Mammary epithelial cell (primary cell): ENCODE measurements at regions of chr7 and their contacts with region 1.

Region 1: DNA sequence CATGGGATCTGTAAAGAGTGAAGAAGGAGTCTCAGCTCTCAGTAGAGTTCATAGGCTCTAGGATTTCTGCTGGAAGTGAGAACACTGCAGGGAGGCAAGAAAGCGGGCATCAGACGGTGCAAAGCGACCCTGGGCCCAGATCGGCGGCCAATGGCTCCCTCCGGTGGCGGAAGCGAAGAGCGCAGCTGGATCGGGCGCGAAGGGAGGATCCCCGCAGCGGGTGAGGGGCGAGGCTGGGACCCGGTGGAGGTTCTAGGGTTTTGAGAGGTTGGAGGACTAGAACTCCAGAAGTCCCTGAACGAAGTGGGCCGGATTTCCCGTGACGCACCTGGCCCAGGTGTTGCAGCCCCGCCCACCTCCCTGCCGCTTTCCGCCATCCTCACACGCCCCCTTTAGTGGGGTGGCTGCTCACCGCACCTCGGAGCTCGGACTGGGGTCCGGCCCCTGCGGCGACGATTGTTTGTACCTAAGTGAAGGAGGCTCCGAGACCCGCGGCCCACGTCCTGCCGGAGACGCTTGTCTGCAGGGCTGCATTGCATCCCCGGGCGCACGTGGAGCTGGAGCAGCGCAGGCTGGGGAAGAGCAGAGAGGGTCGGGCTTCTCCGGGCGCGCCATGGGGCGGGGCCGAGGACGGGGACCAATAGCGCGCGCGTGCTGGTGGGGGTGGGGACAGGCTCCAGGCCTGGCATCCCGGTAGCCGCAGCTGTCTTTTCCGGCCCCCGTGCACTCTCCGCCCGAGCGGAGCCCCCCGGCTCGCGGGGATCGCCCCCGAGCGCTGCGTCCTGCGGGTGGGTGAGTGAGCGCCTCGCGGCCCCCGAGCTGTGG is at the start of gene SLC12A9:
- DNase-seq: peak; percentile 92
- H3K4me3 ChIP-seq: peak within 1 kb of the TSS; percentile 82 to 86 (median 85)
- H3K27ac ChIP-seq: peak within 1 kb of the TSS; percentile 25
- H3K4me1 ChIP-seq: peaks cover 6% of the 10 kb centered on the region
- H3K27me3 ChIP-seq: no peaks in the 10 kb centered on the region
- CTCF ChIP-seq: peak; percentile 79 to 95
- total RNA-seq, gene SLC12A9: 11.7 to 31.0 TPM

Region 2: GRCh38 chr7:100478966-100479665 is 373.1 kb before region 1 on chr7 and contains the start of gene TSC22D4:
- CTCF ChIA-PET with region 1: no interaction called
- dilution Hi-C with region 1: no loop called
- in situ Hi-C with region 1: loop called in 1 of 2 experiments (anchors 25 kb)
- intact Hi-C with region 1: loop called (anchors 5 kb)
- DNase-seq: peak; percentile 90
- H3K4me3 ChIP-seq: peak within 1 kb of the TSS; percentile 92 to 94 (median 93)
- H3K27ac ChIP-seq: peak within 1 kb of the TSS; percentile 57
- H3K4me1 ChIP-seq: peaks cover 23% of the 10 kb centered on the region
- H3K27me3 ChIP-seq: no peaks in the 10 kb centered on the region
- CTCF ChIP-seq: no peak
- total RNA-seq, gene TSC22D4: 12.0 to 35.2 TPM

Region 3: GRCh38 chr7:100611974-100612729 is 240.1 kb before region 1 on chr7 and contains the start of gene MOSPD3:
- CTCF ChIA-PET with region 1: no interaction called
- dilution Hi-C with region 1: loop called (anchors 5 kb)
- in situ Hi-C with region 1: no loop called
- intact Hi-C with region 1: no loop called
- DNase-seq: peak; percentile 98
- H3K4me3 ChIP-seq: peak within 1 kb of the TSS; percentile 67 to 84 (median 70)
- H3K27ac ChIP-seq: peak within 1 kb of the TSS; percentile 86
- H3K4me1 ChIP-seq: peaks cover 6% of the 10 kb centered on the region
- H3K27me3 ChIP-seq: no peaks in the 10 kb centered on the region
- CTCF ChIP-seq: no peak
- total RNA-seq, gene MOSPD3: 6.8 to 16.3 TPM

Region 4: DNA sequence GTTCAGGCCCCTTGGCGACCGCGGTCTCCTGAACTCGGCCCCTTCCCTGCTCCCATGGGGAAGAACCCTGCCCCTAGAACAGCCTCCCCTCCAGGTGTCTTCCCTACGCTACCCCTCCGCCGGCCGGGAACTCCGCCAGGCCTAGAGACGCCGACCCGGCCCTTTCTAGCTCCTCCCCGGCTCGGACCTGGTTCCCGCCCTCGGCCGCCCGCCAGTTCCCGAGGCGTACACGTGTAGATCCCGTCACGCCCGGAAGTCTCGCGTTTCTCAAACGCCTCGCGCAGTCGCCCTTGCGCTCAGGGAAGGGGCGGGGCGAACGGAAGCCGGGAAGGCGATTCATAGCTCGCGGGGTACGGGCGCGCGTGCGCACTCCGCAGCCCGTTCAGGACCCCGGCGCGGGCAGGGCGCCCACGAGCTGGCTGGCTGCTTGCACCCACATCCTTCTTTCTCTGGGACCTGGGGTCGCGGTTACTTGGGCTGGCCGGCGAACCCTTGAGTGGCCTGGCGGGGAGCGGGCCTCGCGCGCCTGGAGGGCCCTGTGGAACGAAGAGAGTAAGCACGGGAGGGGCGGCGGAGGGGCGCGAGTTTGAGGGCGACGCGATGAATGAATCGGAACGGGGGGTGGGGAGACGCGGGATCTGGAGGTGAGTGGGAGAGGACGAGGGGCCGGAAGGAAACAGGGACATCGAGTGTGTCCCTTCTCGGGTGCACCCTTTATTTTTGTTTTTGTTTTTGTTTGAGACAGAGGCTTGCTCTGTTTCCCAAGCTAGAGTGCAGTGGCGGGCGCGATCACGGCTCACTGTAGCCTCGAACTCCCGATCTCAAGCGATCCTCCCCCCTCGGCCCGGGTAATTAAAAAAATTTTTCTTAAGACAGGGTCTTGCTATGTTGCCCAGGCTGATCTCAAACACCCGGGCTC is 146.2 kb before region 1 on chr7 and contains the start of gene POP7:
- CTCF ChIA-PET with region 1: interaction called, 9 read pairs
- dilution Hi-C with region 1: loop called (anchors 5 kb)
- in situ Hi-C with region 1: loop called (anchors 5 to 10 kb)
- intact Hi-C with region 1: loop called (anchors 1 kb)
- DNase-seq: peak; percentile 97
- H3K4me3 ChIP-seq: peak within 1 kb of the TSS; percentile 84 to 98 (median 90)
- H3K27ac ChIP-seq: peak within 1 kb of the TSS; percentile 72
- H3K4me1 ChIP-seq: peaks cover 12% of the 10 kb centered on the region
- H3K27me3 ChIP-seq: no peaks in the 10 kb centered on the region
- CTCF ChIP-seq: no peak
- total RNA-seq, gene POP7: 29.2 to 52.2 TPM

Region 5: DNA sequence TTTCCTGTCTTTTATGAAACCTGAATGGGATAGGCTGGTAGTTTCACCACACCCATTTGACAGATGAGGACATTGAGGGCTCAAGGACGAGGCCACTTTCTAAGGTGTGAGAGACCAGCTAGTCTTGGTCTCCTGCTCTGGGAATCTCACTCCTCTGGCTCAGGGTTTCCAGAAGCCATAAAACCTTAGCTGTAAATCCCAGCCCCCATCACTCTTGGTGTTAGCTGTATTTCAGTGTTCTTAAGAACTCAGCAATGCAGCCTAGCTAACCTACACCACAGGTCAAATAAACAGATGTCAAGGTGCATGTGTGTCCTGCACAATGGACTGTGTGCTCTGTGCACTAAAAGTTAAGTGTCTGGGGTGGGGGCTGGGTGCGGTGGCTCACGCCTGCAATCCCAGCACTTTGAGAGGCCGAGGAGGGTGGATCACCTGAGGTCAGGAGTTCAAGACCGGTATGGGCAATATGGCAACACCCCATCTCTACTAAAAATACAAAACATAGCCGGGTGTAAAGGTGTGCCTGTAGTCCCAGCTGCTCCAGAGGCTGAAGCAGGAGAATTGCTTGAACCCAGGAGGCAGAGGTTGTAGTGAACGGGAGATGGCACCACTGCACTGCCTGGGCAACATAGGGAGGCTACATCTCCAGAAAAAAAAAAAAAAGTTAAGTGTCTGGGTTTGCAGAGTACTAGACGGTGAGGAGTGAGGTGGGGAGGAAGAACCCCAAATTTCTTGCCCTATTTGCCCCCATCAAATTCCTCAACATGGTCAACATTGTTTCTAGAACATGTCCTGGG is 132.5 kb before region 1 on chr7:
- CTCF ChIA-PET with region 1: interaction called, 3 read pairs
- dilution Hi-C with region 1: loop called (anchors 5 kb)
- in situ Hi-C with region 1: no loop called
- intact Hi-C with region 1: loop called (anchors 1 kb)
- DNase-seq: peak; percentile 28
- H3K4me3 ChIP-seq: peak overlapping the region in 1 of 3 experiments; percentile 31
- H3K27ac ChIP-seq: no peak overlapping the region
- H3K4me1 ChIP-seq: peaks cover 3% of the 10 kb centered on the region
- H3K27me3 ChIP-seq: peaks cover 19% of the 10 kb centered on the region
- CTCF ChIP-seq: peak; percentile 32 to 76

Region 6: DNA sequence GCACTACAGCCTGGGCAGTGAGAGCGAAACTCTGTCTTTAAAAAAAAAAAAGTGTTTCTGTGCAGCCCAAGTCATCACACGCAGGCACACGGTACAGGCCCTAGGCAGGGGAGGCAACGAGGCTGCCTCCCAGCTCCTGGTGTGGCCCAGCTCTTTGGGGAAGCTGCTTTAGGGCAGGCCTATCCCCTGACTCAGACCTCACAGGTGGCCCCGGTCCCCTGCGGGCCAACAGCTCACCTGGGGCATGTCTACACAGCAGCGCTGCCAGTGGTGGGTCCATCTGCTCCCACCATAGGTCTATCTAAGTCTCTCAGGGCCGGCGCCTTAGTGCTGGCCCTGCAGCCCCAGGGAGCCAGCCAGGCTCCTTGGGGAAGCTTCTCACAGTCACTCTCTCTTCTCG is 87.4 kb before region 1 on chr7:
- CTCF ChIA-PET with region 1: no interaction called
- dilution Hi-C with region 1: loop called (anchors 5 kb)
- in situ Hi-C with region 1: no loop called
- intact Hi-C with region 1: no loop called
- DNase-seq: no peak
- H3K4me3 ChIP-seq: no peak overlapping the region
- H3K27ac ChIP-seq: no peak overlapping the region
- H3K4me1 ChIP-seq: no peaks in the 10 kb centered on the region
- H3K27me3 ChIP-seq: no peaks in the 10 kb centered on the region
- CTCF ChIP-seq: no peak

Region 7: DNA sequence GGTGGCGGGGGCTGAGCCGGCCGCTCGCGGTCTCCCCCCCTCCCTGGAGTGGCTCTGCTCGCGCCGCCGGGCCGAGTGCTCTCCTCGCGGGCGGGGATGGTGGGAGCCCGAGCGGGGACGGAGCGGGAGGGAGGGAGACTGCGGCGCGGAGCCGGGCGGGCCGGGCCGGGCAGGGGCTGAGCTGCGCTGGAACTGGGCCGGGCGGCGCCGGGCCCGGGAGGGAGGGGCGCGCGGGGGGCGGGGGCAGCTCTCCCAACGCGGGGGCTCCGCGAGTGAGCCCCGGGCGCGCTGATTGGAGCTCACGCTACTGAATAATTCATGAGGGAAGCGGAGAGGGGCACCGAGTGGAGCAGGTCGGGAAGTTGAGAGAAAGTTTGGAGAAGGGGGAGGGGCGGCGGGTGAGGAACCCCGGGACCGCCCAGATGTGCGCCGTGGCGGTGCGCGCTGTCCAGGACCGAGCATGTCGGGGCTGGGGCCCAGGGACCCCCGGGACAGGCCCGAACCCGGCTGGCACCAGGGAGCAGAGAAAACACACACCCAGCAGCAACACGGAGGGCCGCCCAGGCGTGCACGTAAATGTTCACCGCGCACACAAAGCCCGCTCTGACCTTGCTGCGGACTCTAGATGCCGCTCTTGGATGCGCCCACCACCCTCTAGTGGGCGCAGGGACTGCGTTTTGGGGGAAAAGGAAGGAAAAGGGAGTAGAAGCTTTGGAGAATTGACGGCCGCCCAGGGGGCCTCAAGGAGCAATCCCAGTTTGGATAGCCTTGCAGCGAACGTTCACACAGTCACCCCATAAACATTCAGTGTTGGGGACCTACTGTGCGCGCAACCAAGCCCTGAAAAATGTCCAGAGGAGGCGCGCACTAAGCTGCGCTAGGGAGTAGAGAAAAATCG is 24.7 kb before region 1 on chr7 and contains the start of gene EPHB4:
- CTCF ChIA-PET with region 1: no interaction called
- dilution Hi-C with region 1: no loop called
- in situ Hi-C with region 1: no loop called
- intact Hi-C with region 1: loop called (anchors 1 kb)
- DNase-seq: peak; percentile 79
- H3K4me3 ChIP-seq: peak within 1 kb of the TSS; percentile 70 to 86 (median 72)
- H3K27ac ChIP-seq: peak within 1 kb of the TSS; percentile 39
- H3K4me1 ChIP-seq: peaks cover 7% of the 10 kb centered on the region
- H3K27me3 ChIP-seq: no peaks in the 10 kb centered on the region
- CTCF ChIP-seq: no peak
- total RNA-seq, gene EPHB4: 75.0 to 81.0 TPM